Activated CD4-positive, alpha-beta T cell treated with anti-CD3 and anti-CD28 coated beads, Interleukin-2, amount 10 ng/mL, durations not matched to agents 24 days and 14 days (primary cell): ENCODE measurements at regions of chr5 and their contacts with region 1.

Region 1: DNA sequence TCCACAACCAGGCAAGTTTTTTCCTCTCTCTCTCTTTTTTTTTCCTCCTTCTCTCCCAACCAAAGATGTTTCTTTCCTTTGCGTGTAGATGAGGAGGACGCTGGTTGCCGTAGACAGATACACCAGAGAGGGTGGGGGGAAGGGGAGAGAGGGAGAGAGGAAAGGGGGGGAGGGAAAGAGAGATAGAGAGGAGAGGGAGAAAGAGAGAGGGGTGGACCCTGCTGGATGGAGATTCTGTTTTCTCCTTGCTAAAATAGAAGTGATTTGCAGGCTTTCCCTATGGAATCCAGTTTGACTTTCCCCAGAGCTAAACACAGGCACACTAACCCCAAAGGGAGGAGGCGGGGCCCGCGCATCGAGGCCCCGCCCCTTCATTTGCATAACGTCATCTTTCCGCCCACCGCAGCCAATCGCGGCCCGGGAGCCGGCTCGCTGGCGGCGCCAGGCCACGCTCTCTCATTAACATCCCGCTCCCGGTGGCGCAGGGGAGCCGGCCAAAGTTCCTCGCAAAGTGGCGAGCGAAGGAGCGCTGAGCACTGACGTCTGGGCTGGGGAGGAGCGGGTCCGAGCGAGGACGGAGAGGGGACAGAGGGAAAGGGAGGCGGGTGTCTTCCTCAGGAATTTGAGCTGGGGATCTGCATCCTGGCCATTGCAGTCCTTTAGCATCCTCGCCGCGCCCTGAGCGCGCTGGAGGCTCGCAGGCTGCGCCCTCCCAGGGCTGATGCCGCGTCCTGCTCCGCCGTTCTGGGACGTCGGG is 487 bp upstream of the EBF1 start:
- DNase-seq: peak; percentile 96
- H3K4me3 Mint-ChIP-seq: peak overlapping the region; percentile 85
- H3K27ac Mint-ChIP-seq: peak overlapping the region; percentile 64
- H3K4me1 Mint-ChIP-seq: peaks cover 34% of the 10 kb centered on the region
- H3K27me3 Mint-ChIP-seq: peaks cover 83% of the 10 kb centered on the region

Region 2: DNA sequence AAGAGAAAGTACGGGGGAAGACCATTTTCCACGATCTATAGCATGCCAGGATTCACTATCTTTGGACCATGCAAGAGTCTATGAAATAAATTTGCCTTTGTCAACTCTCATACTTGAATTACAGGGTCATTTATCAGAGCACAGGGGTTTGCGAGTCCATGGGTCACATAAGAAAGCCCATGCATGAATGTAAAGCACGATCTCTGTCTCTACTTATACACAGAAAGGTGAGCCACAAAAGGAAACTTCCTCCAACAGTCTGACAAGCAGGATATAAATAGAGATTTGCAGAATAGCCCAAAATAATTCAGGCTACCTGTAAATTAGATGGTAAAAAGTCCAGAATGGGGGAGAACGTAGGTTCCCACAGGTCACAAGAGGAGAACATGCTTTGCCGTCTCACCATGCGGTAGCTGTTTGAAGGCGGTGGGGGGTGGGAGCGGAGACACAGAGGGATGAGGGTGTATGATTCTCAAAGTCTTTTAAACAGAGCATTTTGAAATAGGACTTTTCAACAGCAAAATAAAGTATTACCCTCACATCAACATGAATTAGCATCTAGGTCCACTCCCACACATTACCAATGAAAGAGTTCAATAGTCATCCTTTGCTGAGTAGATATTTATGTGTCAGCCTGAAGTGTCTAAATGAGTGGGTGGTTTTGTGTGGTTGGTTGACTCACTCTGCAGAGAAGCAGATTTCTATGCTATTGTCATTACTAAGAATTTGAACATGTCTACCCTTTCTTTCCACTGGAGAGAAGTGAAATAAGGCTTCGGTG is 280.2 kb before region 1 on chr5:
- intact Hi-C with region 1: loop called (anchors 5 kb)
- DNase-seq: peak; percentile 61
- H3K4me3 Mint-ChIP-seq: peak overlapping the region; percentile 60
- H3K27ac Mint-ChIP-seq: peak overlapping the region; percentile 76
- H3K4me1 Mint-ChIP-seq: peaks cover 45% of the 10 kb centered on the region
- H3K27me3 Mint-ChIP-seq: no peaks in the 10 kb centered on the region